ENCODE measurements at regions of chr13 and their contacts with region 1.

Region 1: DNA sequence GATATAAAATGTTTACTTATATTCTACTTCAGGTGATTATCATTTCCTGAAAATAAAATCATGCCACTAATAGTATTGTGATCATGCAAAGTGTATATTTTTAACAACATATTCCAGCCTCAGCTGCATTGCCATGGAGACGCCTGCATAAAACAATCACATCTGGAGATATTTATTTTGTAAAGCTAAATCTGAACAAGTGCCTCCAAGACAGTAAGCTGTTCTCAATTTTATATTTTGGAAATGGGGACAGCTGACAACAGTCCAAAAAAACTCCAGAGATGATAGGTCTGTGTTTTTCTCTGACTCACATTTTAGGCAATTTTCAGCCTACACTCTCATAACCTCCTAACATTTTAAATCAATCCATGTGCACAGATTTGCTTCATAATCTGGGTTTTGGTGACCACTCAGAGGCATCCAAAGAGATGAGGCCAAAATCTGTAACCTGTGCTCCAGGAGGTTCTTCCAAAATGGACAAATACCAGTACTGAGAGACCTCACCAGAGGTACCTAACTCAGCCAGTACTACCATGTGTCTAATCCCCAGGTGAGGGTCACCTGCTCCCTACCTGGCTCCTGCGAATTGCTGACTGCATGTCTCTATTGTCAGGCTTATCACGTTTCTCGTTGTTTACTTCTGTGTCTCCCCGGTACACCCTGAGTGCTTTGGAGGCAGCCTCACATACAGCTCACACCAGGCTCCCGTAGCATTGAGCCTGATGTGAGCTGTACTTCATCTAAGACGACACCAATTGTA is 62.7 kb downstream of the COL4A1 start:
- DNase-seq: no peak
- H3K4me3 ChIP-seq: no peak overlapping the region
- H3K27ac ChIP-seq: peak overlapping the region; percentile 45 to 69; a peak in 3 of 4 replicates
- H3K4me1 ChIP-seq: peaks cover 22 to 28% of the 10 kb centered on the region in 2 experiments; a peak in 3 of 4 replicates
- H3K27me3 ChIP-seq: no peaks in the 10 kb centered on the region
- CTCF ChIP-seq: no peak
- EP300 ChIP-seq: no peak
- RAD21 ChIP-seq: no peak

Region 2: GRCh38 chr13:110220471-110220870 is 23.8 kb before region 1 on chr13:
- CTCF ChIA-PET with region 1: interaction called, 17 read pairs
- POLR2A ChIA-PET with region 1: no interaction called
- DNase-seq: no peak
- H3K4me3 ChIP-seq: no peak overlapping the region
- H3K27ac ChIP-seq: no peak overlapping the region
- H3K4me1 ChIP-seq: peaks cover 12 to 13% of the 10 kb centered on the region in 2 experiments; a peak in 2 of 4 replicates
- H3K27me3 ChIP-seq: no peaks in the 10 kb centered on the region
- CTCF ChIP-seq: no peak
- EP300 ChIP-seq: no peak
- RAD21 ChIP-seq: no peak

Region 3: DNA sequence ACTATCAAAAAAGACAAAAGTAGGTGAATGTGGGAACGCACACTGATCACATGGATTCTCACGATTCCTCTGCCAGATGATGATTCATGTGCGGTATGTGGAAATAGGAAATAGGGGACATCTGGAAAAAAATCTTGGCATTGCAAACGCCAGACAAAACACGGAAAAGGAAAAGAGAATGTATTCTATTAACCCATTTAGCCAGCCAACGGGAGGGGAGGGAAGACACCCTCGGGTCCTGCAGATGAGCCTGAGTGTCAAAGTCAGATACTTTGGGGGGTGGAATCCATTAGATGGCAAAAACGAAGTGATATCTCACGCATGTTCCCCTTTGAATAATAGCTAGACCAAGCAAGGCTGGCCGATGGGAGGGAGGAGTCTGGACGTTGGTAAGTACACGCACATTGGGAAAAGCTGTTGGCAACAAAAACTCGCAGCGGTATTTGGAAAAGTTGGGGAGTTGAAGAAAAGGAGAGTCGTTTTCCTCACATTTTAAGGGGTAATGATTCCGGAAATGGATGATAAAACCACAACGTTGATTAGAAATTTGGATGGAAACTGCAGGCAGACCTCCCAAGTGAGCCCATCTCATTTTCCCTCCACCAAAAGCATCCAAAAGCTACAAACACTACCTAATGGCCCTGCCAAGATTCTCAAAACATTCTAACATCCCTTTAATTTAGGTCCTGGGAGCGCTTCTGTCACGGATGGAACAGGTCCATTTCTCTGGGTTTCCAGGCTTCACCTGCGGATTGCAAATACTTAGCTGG is 10.9 kb before region 1 on chr13:
- CTCF ChIA-PET with region 1: interaction called, 13 read pairs
- POLR2A ChIA-PET with region 1: no interaction called
- DNase-seq: peak; percentile 42
- H3K4me3 ChIP-seq: peak overlapping the region in 1 of 2 experiments; percentile 15; a peak in 1 of 4 replicates
- H3K27ac ChIP-seq: peak overlapping the region; percentile 19 to 80; a peak in 3 of 4 replicates
- H3K4me1 ChIP-seq: peaks cover 33 to 37% of the 10 kb centered on the region in 2 experiments
- H3K27me3 ChIP-seq: no peaks in the 10 kb centered on the region
- CTCF ChIP-seq: no peak
- EP300 ChIP-seq: peak; percentile 35 to 44; a peak in 2 of 4 replicates
- RAD21 ChIP-seq: no peak

Region 4: GRCh38 chr13:110262508-110263291 is 18.4 kb after region 1 on chr13:
- CTCF ChIA-PET with region 1: interaction called, 13 read pairs
- POLR2A ChIA-PET with region 1: no interaction called
- DNase-seq: no peak
- H3K4me3 ChIP-seq: no peak overlapping the region
- H3K27ac ChIP-seq: no peak overlapping the region
- H3K4me1 ChIP-seq: peaks cover 8 to 57% of the 10 kb centered on the region in 2 experiments; a peak in 3 of 4 replicates
- H3K27me3 ChIP-seq: no peaks in the 10 kb centered on the region
- CTCF ChIP-seq: no peak
- EP300 ChIP-seq: no peak
- RAD21 ChIP-seq: no peak

Region 5: GRCh38 chr13:110306960-110307746 is 62.9 kb after region 1 on chr13 and contains the starts of genes COL4A1 and COL4A2:
- CTCF ChIA-PET with region 1: interaction called, 15 read pairs
- POLR2A ChIA-PET with region 1: interaction called, 4 read pairs
- DNase-seq: peak; percentile 84
- H3K4me3 ChIP-seq: peak within 1 kb of the TSS; percentile 80 to 95
- H3K27ac ChIP-seq: peak within 1 kb of the TSS; percentile 66 to 79
- H3K4me1 ChIP-seq: peaks cover 33 to 37% of the 10 kb centered on the region in 2 experiments
- H3K27me3 ChIP-seq: no peaks in the 10 kb centered on the region
- CTCF ChIP-seq: no peak
- EP300 ChIP-seq: no peak
- RAD21 ChIP-seq: no peak
- polyA plus RNA-seq, gene COL4A1: 28.2 and 30.3 TPM in 2 replicates
- polyA plus RNA-seq, gene COL4A2: 61.1 and 137 TPM in 2 replicates

Measured in SK-N-SH (cell line).